Cardiac septum (tissue), 1 donor: ENCODE measurements at regions of chr4 and their contacts with region 1.

Region 1: DNA sequence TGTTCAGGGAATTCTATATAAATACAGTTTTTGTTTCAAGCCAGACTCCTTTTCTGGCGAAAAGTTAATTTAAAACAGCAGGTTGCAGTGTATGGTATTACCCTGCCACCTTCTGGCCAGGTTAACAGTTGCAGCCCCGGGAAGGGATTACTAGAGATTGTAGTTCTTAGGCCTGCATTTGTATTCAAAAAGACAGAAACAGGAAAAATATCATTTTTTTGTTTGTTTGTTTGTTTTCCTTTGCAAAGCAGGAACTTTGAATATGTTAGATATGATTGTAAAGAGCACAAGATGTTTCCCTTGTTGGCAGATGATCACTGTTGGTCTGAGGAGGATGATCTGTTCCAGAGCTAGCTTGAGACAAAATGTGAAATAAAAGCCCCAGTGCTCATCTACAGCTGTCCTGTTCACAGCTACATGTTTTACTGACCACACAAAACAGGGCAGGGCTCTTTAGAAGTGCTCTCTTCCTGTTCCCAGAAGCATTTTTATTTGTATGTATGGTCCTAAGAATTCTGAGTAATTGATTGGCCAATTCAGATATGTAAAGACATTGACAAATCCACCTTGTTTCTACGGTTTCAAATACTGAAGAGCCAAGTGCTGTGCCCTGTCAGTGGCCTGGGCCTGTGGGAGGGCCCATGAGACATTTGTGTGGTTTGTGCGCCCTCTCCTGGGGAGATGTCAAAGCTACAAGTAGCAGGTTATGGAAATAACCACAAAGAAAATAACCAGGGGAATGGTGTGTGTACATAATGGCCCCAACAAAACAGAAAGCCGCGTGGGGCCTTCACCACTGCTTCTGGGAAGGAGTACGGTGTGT is 57.9 kb downstream of the CLDN22 start:
- DNase-seq: peak; percentile 88

Region 2: DNA sequence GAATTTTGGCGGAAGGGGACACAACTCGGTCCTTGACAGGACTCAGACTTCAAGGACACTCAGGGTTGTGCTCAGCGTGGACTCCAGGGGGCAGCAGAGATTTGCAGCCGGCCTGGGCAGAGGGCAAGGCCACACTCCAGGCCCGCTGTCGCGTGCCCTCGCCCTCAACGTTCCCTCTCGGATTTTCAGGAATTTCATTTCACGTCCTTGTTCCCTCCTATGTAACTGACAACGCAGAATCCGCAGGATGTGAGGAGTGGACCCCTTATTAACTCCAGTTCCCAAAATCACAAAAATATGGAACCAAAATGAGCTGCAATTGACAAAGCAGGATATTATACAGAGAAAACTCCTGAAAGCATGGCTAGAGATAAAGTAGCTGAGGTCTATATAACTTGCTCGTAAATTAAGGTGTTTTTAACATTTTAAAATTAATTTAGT is 323.9 kb before region 1 on chr4:
- intact Hi-C with region 1: loop called (anchors 2 kb)
- DNase-seq: peak; percentile 82